Endothelial cell of umbilical vein (primary cell): ENCODE measurements at regions of chr12 and their contacts with region 1.

Region 1: GRCh38 chr12:14239350-14239934 is 126.0 kb upstream of the ATF7IP start:
- DNase-seq: no peak
- H3K4me3 ChIP-seq: no peak overlapping the region
- H3K27ac ChIP-seq: no peak overlapping the region
- H3K4me1 ChIP-seq: no peaks in the 10 kb centered on the region
- H3K27me3 ChIP-seq: no peaks in the 10 kb centered on the region
- CTCF ChIP-seq: no peak
- POLR2A ChIP-seq: no peak

Region 2: GRCh38 chr12:14225064-14225463 is 14.4 kb before region 1 on chr12:
- CTCF ChIA-PET with region 1: interaction called, 11 read pairs
- POLR2A ChIA-PET with region 1: no interaction called
- dilution Hi-C with region 1: no loop called
- intact Hi-C with region 1: no loop called
- DNase-seq: no peak
- H3K4me3 ChIP-seq: no peak overlapping the region
- H3K27ac ChIP-seq: no peak overlapping the region
- H3K4me1 ChIP-seq: no peaks in the 10 kb centered on the region
- H3K27me3 ChIP-seq: peaks cover 0 to 6% of the 10 kb centered on the region in 2 experiments
- CTCF ChIP-seq: no peak
- POLR2A ChIP-seq: no peak

Region 3: DNA sequence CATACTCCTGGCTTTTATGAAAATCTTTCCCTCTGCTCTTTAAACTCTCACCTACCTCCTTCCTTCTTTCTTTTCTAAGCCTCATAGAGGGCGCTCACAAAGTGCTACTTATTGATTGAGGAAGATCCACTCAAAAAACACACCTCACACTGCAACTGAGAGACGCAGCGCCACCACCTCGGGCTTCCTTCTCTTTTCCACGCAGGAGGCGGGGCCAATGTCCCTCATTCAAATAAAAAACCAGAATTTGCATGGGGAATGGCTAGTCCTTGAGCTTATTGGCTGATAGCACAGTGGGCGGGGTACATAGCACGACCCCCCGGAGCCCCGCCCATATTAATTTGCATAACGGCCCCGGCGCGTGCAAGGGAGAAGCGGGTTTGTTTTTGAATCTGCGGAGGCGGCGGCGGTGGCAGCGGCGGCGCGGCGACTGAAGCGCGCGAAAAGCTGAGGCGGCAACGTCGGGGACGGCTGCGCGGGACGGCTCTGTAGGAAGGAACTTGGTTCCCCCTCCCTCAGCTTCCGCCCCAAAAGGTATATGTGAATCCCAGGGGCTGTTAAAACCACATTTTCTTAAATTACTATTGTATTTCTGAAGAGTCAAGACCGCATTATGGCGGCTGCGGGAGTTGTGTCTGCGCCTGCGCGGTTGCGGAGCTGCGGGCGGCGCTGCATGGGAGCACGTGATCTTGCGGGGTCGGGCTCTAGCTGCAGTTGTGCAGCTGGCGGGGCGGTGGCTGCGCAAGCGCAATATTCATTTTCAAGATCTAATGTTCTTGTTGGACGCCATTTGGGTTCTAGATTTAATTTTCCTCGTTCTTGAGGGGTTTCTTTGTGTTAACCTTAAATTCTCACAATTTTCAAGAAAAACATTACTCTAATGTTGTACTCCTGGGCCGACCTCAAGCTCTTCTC is 126.1 kb after region 1 on chr12 and contains the start of gene ATF7IP:
- CTCF ChIA-PET with region 1: interaction called, 32 read pairs
- POLR2A ChIA-PET with region 1: interaction called, 3 read pairs
- dilution Hi-C with region 1: no loop called
- intact Hi-C with region 1: loop called (anchors 1 kb)
- DNase-seq: peak; percentile 97
- H3K4me3 ChIP-seq: peak within 1 kb of the TSS; percentile 53 to 98 (median 98)
- H3K27ac ChIP-seq: peak within 1 kb of the TSS; percentile 89
- H3K4me1 ChIP-seq: peaks cover 17% of the 10 kb centered on the region
- H3K27me3 ChIP-seq: no peaks in the 10 kb centered on the region
- CTCF ChIP-seq: no peak
- POLR2A ChIP-seq: peak; percentile 81
- total RNA-seq, gene ATF7IP: 72.4 and 73.5 TPM in 2 replicates

Region 4: DNA sequence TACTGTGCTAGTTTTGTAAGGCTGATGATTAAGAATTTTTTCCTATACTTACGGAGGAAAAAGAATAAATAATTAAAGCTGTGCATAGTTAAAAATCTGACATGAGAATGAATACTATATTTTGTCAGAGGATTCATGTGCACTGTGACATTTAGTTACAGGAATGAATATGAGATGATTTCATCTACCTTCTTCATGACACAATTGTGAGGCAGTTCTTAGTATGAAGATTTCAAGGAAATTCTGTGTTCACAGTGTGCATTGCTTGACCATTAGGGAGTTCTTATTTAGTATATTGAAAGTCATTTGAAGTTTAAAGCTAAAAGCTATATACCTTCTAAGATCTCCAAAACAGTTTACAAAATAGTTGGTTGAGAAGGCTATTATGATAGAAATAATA is 196.2 kb after region 1 on chr12:
- CTCF ChIA-PET with region 1: interaction called, 10 read pairs
- POLR2A ChIA-PET with region 1: no interaction called
- dilution Hi-C with region 1: no loop called
- intact Hi-C with region 1: no loop called
- DNase-seq: no peak
- H3K4me3 ChIP-seq: no peak overlapping the region
- H3K27ac ChIP-seq: no peak overlapping the region
- H3K4me1 ChIP-seq: no peaks in the 10 kb centered on the region
- H3K27me3 ChIP-seq: no peaks in the 10 kb centered on the region
- CTCF ChIP-seq: no peak
- POLR2A ChIP-seq: no peak

Region 5: GRCh38 chr12:14514154-14514842 is 274.9 kb after region 1 on chr12:
- CTCF ChIA-PET with region 1: interaction called, 23 read pairs
- POLR2A ChIA-PET with region 1: no interaction called
- dilution Hi-C with region 1: no loop called
- intact Hi-C with region 1: no loop called
- DNase-seq: no peak
- H3K4me3 ChIP-seq: no peak overlapping the region
- H3K27ac ChIP-seq: no peak overlapping the region
- H3K4me1 ChIP-seq: no peaks in the 10 kb centered on the region
- H3K27me3 ChIP-seq: no peaks in the 10 kb centered on the region
- CTCF ChIP-seq: no peak
- POLR2A ChIP-seq: no peak

Region 6: GRCh38 chr12:14664510-14664909 is 425.1 kb after region 1 on chr12:
- CTCF ChIA-PET with region 1: interaction called, 40 read pairs
- POLR2A ChIA-PET with region 1: no interaction called
- dilution Hi-C with region 1: no loop called
- intact Hi-C with region 1: loop called (anchors 2 kb)
- DNase-seq: peak; percentile 57
- H3K4me3 ChIP-seq: no peak overlapping the region
- H3K27ac ChIP-seq: no peak overlapping the region
- H3K4me1 ChIP-seq: no peaks in the 10 kb centered on the region
- H3K27me3 ChIP-seq: peaks cover 0 to 2% of the 10 kb centered on the region in 2 experiments
- CTCF ChIP-seq: peak; percentile 27 to 32
- POLR2A ChIP-seq: no peak

Region 7: GRCh38 chr12:14795028-14795448 is 555.6 kb after region 1 on chr12:
- CTCF ChIA-PET with region 1: no interaction called
- POLR2A ChIA-PET with region 1: no interaction called
- dilution Hi-C with region 1: no loop called
- intact Hi-C with region 1: no loop called
- DNase-seq: no peak
- H3K4me3 ChIP-seq: no peak overlapping the region
- H3K27ac ChIP-seq: no peak overlapping the region
- H3K4me1 ChIP-seq: no peaks in the 10 kb centered on the region
- H3K27me3 ChIP-seq: no peaks in the 10 kb centered on the region
- CTCF ChIP-seq: no peak
- POLR2A ChIP-seq: no peak